Activated B cell treated with CpG ODN at 0.5 μM for 24 hours (primary cell): ENCODE measurements at regions of chr5 and their contacts with region 1.

Region 1: GRCh38 chr5:119022017-119022745 is 33.8 kb upstream of the DTWD2 start:
- DNase-seq: no peak
- ATAC-seq: peak; percentile 62
- H3K4me3 Mint-ChIP-seq: peak overlapping the region; percentile 45
- H3K27ac Mint-ChIP-seq: peak overlapping the region; percentile 87
- H3K4me1 Mint-ChIP-seq: peaks cover 72% of the 10 kb centered on the region
- H3K27me3 Mint-ChIP-seq: no peaks in the 10 kb centered on the region
- CTCF ChIP-seq: no peak

Region 2: DNA sequence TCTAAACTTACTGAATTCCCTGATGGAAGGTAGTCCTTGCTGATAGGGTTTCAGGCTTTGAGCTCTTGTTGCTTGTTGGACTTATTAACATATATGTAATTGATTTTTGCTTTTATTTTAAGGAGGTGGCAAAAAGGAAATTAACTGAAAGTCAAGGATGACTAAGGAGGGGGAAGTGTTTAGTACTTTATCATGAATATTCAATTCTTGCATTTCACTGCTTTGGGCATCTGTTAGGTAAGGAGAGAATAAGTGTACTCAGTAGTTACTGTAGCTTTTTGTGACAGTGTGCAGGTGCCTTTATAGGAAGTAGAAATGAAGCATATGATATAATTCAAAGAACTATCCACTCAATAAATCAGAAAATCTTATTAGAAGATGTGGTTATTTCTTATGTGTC is 95.8 kb after region 1 on chr5:
- CTCF ChIA-PET with region 1: interaction called, 3 read pairs
- POLR2A ChIA-PET with region 1: no interaction called
- intact Hi-C with region 1: loop called (anchors 5 kb)
- DNase-seq: no peak
- ATAC-seq: no peak
- H3K4me3 Mint-ChIP-seq: no peak overlapping the region
- H3K27ac Mint-ChIP-seq: no peak overlapping the region
- H3K4me1 Mint-ChIP-seq: peaks cover 3% of the 10 kb centered on the region
- H3K27me3 Mint-ChIP-seq: no peaks in the 10 kb centered on the region
- CTCF ChIP-seq: no peak

Region 3: DNA sequence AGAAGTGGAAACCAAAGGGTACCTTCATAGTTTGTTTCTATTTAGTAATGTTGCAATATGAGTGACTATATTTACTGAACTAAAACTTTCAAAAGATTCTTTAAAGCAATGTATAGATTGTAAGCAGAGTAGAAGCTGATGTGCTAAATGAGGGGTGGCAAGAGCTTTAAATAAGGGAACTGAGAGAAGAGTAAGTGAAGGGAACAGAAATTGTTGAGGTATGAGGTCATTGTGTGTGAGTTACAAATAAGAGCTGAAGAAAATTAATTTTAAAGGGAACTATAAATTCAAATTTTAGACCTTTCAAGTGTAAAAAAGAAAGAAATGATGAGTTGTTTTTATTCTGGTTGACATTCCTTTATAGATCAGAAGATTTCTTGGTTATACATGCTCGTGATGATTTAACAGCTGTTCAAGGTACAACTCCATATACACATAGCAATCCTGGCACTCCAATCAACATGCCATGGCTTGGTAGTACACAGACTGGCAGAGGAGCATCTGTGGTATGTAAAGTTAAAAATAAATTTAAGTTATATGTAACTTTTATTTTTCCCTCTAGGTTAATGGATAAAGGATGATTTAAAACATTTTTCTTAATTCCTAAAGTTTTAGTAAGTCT is 198.5 kb after region 1 on chr5:
- CTCF ChIA-PET with region 1: interaction called, 11 read pairs
- POLR2A ChIA-PET with region 1: no interaction called
- intact Hi-C with region 1: loop called (anchors 2 kb)
- DNase-seq: no peak
- ATAC-seq: peak; percentile 97
- H3K4me3 Mint-ChIP-seq: peak overlapping the region; percentile 4
- H3K27ac Mint-ChIP-seq: peak overlapping the region; percentile 47
- H3K4me1 Mint-ChIP-seq: peaks cover 25% of the 10 kb centered on the region
- H3K27me3 Mint-ChIP-seq: no peaks in the 10 kb centered on the region
- CTCF ChIP-seq: no peak

Region 4: DNA sequence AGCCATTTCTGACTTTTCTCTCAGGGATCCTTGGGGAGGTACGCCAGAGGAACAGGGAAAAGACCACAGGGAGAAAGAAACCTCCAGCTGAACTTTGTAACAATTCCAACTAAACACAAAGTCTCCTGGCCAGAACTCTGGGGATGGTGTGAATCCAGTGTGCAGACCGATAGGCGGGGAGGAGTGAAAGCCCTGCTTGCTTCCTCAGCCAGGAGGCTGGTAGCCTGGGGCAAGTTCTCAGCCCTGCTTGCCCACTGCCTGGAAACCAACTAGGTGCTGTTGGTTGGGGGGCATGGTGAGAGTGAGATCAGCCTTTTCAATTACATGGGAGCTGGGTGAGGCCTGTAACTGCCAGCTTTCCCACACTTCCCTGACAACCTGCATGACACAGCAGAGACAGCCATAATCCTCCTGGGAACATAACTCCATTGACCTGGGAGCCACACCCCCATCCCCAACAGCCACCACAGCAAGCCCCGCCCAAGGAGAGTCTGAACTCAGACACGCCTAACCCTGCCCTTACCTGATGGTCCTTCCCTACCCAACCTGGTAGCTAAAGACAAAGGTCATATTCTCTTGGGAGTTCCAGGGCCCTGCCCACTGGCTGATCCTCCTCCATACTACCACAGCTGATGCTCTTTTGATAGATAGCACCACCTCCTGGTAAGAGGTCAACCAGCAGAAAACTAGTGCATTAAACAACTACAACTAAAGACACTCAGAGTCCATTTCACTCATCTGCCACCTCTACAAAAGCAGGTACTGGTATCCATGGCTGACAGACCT is 233.6 kb after region 1 on chr5:
- CTCF ChIA-PET with region 1: no interaction called
- POLR2A ChIA-PET with region 1: no interaction called
- intact Hi-C with region 1: loop called (anchors 2 kb)
- DNase-seq: no peak
- ATAC-seq: no peak
- H3K4me3 Mint-ChIP-seq: no peak overlapping the region
- H3K27ac Mint-ChIP-seq: no peak overlapping the region
- H3K4me1 Mint-ChIP-seq: peaks cover 2% of the 10 kb centered on the region
- H3K27me3 Mint-ChIP-seq: no peaks in the 10 kb centered on the region
- CTCF ChIP-seq: no peak

Region 5: DNA sequence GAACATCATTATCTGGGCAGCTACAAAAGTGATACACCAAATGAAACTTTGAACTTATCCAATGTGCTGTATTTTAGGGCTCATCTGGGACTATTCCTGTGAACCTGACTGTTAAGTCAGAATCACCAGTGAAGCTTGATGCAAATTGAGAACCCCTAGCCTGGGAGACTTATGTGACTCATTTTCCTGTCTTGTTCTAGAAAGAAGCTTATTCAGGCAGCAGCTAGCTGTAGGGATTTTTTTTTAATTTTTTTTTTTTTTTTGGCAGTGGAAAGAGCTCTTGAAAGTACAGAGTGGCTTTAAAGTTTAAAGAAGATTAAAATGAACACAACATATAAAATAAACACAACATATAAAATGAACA is 252.6 kb after region 1 on chr5:
- CTCF ChIA-PET with region 1: interaction called, 3 read pairs
- POLR2A ChIA-PET with region 1: no interaction called
- intact Hi-C with region 1: loop called (anchors 2 kb)
- DNase-seq: no peak
- ATAC-seq: peak; percentile 42
- H3K4me3 Mint-ChIP-seq: peak overlapping the region; percentile 78
- H3K27ac Mint-ChIP-seq: peak overlapping the region; percentile 89
- H3K4me1 Mint-ChIP-seq: peaks cover 97% of the 10 kb centered on the region
- H3K27me3 Mint-ChIP-seq: no peaks in the 10 kb centered on the region
- CTCF ChIP-seq: no peak

Region 6: GRCh38 chr5:119435436-119436132 is 413.4 kb after region 1 on chr5:
- CTCF ChIA-PET with region 1: interaction called, 10 read pairs
- POLR2A ChIA-PET with region 1: no interaction called
- intact Hi-C with region 1: loop called (anchors 1 kb)
- DNase-seq: peak; percentile 73
- ATAC-seq: peak; percentile 93
- H3K4me3 Mint-ChIP-seq: peak overlapping the region; percentile 29
- H3K27ac Mint-ChIP-seq: peak overlapping the region; percentile 19
- H3K4me1 Mint-ChIP-seq: peaks cover 32% of the 10 kb centered on the region
- H3K27me3 Mint-ChIP-seq: no peaks in the 10 kb centered on the region
- CTCF ChIP-seq: peak; percentile 81